ENCODE measurements at regions of chr16 and their contacts with region 1.

Region 1: GRCh38 chr16:27253526-27253930 is 15.0 kb downstream of the NSMCE1 start:
- DNase-seq: no peak
- H3K4me3 Mint-ChIP-seq: peak overlapping the region; percentile 59
- H3K27ac Mint-ChIP-seq: peak overlapping the region; percentile 88
- H3K4me1 Mint-ChIP-seq: peaks cover 82% of the 10 kb centered on the region
- H3K27me3 Mint-ChIP-seq: no peaks in the 10 kb centered on the region

Region 2: GRCh38 chr16:27203429-27204231 is 49.9 kb before region 1 on chr16 and contains the start of gene KDM8:
- intact Hi-C with region 1: loop called (anchors 1 kb)
- DNase-seq: peak; percentile 100
- H3K4me3 Mint-ChIP-seq: peak within 1 kb of the TSS; percentile 97
- H3K27ac Mint-ChIP-seq: peak within 1 kb of the TSS; percentile 99
- H3K4me1 Mint-ChIP-seq: peaks cover 53% of the 10 kb centered on the region
- H3K27me3 Mint-ChIP-seq: no peaks in the 10 kb centered on the region
- total RNA-seq, gene KDM8: 12.5 and 14.5 TPM in 2 replicates

Region 3: DNA sequence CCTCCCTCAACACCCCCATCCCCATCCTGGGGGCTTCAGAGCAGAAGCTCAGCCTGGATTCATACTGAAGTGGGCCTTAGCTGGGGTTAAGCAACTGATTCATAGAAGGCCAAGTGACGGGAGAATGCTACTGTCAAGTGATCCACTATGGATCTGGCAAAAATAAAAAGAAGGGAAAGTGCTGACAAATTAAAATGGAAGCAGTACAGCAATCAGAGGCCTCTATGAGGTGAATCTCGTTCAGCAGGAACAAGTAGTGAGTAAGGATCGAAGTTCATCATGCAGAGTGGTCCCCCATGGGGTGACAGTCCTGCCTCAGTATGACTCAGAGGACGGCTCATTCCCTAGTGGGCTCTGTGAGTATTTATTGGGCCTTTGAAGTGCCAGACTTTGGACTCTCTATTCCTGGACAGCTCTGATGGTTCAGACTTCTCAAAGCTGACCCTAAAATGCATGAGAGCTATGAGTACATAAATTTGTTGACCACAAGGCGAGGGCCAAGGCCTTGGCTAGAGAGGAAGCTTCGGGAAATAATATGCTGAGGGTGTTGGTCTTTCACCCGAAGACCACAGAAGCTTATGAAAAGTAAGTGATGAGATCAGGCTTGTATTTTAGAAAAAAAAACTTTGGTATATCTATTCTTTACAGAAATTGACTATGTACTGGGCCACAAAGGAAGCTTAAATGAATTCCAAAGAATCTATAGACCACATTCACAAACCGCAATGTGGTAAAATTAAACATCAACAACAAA is 20.3 kb after region 1 on chr16:
- intact Hi-C with region 1: loop called (anchors 1 kb)
- DNase-seq: no peak
- H3K4me3 Mint-ChIP-seq: peak overlapping the region; percentile 32
- H3K27ac Mint-ChIP-seq: peak overlapping the region; percentile 87
- H3K4me1 Mint-ChIP-seq: peaks cover 65% of the 10 kb centered on the region
- H3K27me3 Mint-ChIP-seq: no peaks in the 10 kb centered on the region

Region 4: DNA sequence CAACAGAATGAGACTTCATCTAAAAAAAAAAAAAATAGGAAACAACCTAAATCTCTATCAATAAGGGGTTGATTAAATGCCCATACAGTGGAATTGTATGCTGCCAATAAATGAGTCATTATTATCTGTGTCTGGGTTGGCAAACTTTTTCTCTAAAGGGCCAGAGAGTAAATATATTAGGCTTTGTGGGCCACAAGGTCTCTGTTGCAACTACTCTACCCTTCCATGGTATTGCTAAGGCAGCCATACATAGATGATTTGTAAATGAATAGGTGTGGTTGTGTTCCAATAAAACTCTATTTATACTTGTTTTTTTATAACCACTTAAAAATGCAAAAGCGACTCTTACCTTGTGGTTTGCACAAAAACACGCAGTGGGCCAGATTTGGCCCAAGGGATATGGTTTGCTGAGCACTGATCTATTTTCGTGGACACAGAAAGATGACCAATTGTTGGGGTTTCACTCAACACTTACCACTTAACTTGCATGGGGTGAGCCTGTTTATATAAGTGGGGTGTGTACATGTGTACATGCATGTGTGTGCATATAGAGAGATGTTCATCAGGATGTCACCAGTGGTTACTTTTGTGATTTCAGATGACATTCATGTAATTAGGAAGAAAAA is 47.8 kb after region 1 on chr16:
- intact Hi-C with region 1: no loop called
- DNase-seq: no peak
- H3K4me3 Mint-ChIP-seq: no peak overlapping the region
- H3K27ac Mint-ChIP-seq: no peak overlapping the region
- H3K4me1 Mint-ChIP-seq: peaks cover 13% of the 10 kb centered on the region
- H3K27me3 Mint-ChIP-seq: peaks cover 4% of the 10 kb centered on the region

Region 5: DNA sequence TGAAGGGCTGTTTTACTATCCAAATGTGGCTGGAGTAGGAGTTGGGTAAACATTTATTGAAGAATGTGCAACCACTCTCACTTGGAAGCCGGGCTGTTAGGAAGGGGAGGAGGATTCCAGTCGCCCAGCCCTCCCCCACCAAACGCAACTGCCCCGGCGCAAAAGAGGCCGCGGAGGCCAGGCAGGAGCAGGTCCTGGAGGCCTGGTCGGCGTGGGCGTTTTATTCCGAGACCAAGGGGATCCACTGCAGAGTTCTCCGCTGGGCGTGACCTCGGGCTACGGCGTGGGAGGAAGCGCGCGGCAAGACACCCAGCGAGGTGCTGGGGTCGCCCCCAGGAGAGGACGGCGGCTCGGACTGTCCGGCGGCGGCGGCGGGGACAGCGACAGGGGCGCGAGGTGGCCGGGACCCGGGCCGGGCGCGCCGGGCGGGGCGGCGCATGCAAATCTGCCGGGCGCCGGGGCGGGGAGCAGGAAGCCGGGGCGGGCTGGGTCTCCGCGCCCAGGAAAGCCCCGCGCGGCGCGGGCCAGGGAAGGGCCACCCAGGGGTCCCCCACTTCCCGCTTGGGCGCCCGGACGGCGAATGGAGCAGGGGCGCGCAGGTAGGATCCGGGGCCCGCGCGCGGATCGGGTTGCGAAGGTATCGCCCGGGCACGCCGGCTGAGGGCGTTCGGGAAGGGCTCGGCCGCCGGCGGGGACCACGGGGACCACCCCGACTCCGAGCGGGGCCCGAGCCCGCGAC is 60.1 kb after region 1 on chr16 and contains the start of gene IL4R:
- intact Hi-C with region 1: loop called (anchors 1 kb)
- DNase-seq: peak; percentile 72
- H3K4me3 Mint-ChIP-seq: peak within 1 kb of the TSS; percentile 94
- H3K27ac Mint-ChIP-seq: peak within 1 kb of the TSS; percentile 99
- H3K4me1 Mint-ChIP-seq: peaks cover 47% of the 10 kb centered on the region
- H3K27me3 Mint-ChIP-seq: peaks cover 2% of the 10 kb centered on the region
- total RNA-seq, gene IL4R: 288 and 320 TPM in 2 replicates

Region 6: DNA sequence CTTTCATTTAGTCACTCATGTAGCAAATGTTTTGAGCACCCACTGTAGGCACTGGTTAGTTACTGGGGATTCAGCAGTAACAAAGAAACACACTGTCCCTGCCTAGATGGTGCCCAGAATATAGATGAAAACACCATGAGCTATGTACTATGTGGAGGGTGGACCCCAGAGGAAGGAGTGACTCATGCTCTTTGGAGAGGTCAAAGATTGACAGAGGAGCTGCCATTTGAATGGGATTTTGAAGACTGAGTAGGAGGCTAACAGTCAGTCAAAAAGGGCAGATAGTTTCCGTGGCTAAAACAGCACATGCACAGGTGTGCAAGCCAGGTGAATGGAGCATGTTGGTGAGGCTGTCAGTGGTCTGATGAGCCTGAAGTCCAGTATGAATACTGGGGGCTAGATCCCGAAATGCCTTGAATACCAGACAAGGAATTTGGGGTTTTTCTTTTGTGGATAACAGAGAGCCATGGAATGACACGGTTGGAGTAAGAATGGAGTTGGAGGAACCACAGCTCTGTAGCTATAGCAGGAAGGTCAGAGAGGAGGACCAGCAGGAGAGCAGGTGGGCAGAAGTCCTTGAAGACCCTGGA is 154.6 kb after region 1 on chr16:
- intact Hi-C with region 1: loop called (anchors 5 kb)
- DNase-seq: no peak
- H3K4me3 Mint-ChIP-seq: peak overlapping the region; percentile 100
- H3K27ac Mint-ChIP-seq: peak overlapping the region; percentile 100
- H3K4me1 Mint-ChIP-seq: peaks cover 82% of the 10 kb centered on the region
- H3K27me3 Mint-ChIP-seq: no peaks in the 10 kb centered on the region

Measured in activated T-helper 1 cell treated with anti-CD3 and anti-CD28 coated beads, Interleukin-12 subunit alpha, Interleukin-12 subunit beta, Interleukin-2, Interleukin-4 antibody, amounts not matched to agents 30 ng/mL and 10 ng/mL and 1 ng/mL, durations not matched to agents 14 hours and 24 hours and 36 hours (primary cell).